Heart right ventricle (tissue), 16 donors: ENCODE measurements at regions of chr10 and their contacts with region 1.

Region 1: GRCh38 chr10:107814865-107815487 is 650.5 kb upstream of the SORCS1 start:
- DNase-seq: peak in 1 of 2 donors; percentile 38
- ATAC-seq: peak in 4 of 8 donors; percentile 49 to 58 (median 58)
- H3K4me3 ChIP-seq: no peak overlapping the region
- H3K27ac ChIP-seq: no peak overlapping the region
- H3K4me1 ChIP-seq: no peaks in the 10 kb centered on the region
- H3K27me3 ChIP-seq: no peaks in the 10 kb centered on the region
- CTCF ChIP-seq: peak; percentile 34 to 69 (median 57)

Region 2: DNA sequence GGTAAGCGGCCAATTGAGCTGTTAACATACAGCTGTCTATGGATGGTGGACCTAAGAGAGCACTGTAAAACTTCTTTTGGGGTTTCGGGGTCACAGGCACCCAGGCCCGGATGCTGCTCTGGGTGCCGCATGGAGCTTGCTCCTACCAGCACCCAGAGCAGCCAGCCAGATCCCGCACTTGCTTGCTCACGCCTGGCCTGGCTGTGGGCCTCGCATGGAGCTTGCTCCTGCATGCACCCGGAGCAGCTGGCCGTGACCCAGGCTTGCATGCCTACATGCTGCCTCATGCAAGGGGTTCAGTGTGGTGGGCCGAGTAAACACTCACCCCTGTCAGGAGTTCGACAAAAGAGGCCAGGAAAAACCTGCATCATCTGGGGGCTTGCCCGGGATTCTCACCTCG is 1547.4 kb before region 1 on chr10:
- intact Hi-C with region 1: loop called in 1 of 10 experiments (anchors 5 kb)
- DNase-seq: no peak
- ATAC-seq: no peak
- H3K4me3 ChIP-seq: no peak overlapping the region
- H3K27ac ChIP-seq: no peak overlapping the region
- H3K4me1 ChIP-seq: no peaks in the 10 kb centered on the region
- H3K27me3 ChIP-seq: no peaks in the 10 kb centered on the region
- CTCF ChIP-seq: no peak

Region 3: DNA sequence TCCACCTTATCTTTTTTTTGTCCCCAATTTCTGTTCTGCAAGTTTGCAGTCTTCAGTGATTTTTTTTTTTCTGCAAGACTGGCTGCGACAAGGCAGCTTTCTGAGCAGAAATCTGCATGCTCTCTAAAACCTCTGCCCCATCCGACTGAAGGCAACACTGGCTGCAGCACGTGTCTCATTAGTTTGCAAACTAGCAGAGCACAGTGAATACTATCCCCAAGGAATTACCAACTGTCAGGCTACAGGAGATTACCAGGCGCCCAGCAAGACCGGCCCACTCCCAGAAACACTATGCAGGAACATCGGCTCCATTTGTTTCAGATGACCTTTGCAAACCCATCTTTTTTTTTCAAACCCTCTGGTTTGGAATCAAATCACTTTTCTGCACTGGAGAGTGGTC is 1189.2 kb before region 1 on chr10:
- intact Hi-C with region 1: loop called in 2 of 10 experiments (anchors 10 kb)
- DNase-seq: no peak
- ATAC-seq: no peak
- H3K4me3 ChIP-seq: no peak overlapping the region
- H3K27ac ChIP-seq: no peak overlapping the region
- H3K4me1 ChIP-seq: peaks cover 0 to 6% (median 0%) of the 10 kb centered on the region in 9 donors
- H3K27me3 ChIP-seq: no peaks in the 10 kb centered on the region
- CTCF ChIP-seq: no peak

Region 4: GRCh38 chr10:106705681-106706100 is 1109.3 kb before region 1 on chr10:
- intact Hi-C with region 1: loop called in 5 of 10 experiments (anchors 10 kb)
- DNase-seq: peak; percentile 20 to 56
- ATAC-seq: peak in 6 of 8 donors; percentile 42 to 79 (median 71)
- H3K4me3 ChIP-seq: peak overlapping the region in 2 of 10 donors; percentile 10 to 14
- H3K27ac ChIP-seq: no peak overlapping the region
- H3K4me1 ChIP-seq: no peaks in the 10 kb centered on the region
- H3K27me3 ChIP-seq: peaks cover 0 to 13% (median 0%) of the 10 kb centered on the region in 7 donors
- CTCF ChIP-seq: peak; percentile 54 to 79 (median 75)

Region 5: GRCh38 chr10:106795619-106796018 is 1019.4 kb before region 1 on chr10:
- intact Hi-C with region 1: loop called in 4 of 10 experiments (anchors 5 to 10 kb)
- DNase-seq: peak in 1 of 2 donors; percentile 30
- ATAC-seq: peak in 6 of 8 donors; percentile 45 to 81 (median 74)
- H3K4me3 ChIP-seq: no peak overlapping the region
- H3K27ac ChIP-seq: no peak overlapping the region
- H3K4me1 ChIP-seq: no peaks in the 10 kb centered on the region
- H3K27me3 ChIP-seq: peaks cover 0 to 8% (median 0%) of the 10 kb centered on the region in 7 donors
- CTCF ChIP-seq: peak in 8 of 9 donors; percentile 18 to 61 (median 52)

Region 6: DNA sequence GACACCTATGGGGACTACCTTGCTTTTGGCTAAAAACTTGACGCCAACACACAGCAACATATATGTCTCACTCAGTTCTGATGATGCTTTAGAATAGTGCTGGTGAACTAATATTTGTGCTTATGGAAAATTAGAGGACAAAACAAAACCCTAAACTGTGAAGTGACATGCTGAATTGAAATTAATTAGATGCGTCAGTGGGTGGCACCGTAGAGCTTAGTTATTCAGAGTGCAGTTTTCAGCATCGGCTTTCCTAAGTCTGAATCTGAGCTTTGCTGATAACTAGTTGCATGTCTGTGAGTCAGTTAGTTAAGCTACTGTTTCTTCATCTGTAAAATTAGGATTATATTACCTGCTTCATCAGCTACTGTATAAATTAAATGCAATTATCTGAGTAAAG is 405.5 kb before region 1 on chr10:
- intact Hi-C with region 1: loop called in 2 of 10 experiments (anchors 10 kb)
- DNase-seq: no peak
- ATAC-seq: peak in 1 of 8 donors; percentile 43
- H3K4me3 ChIP-seq: no peak overlapping the region
- H3K27ac ChIP-seq: no peak overlapping the region
- H3K4me1 ChIP-seq: no peaks in the 10 kb centered on the region
- H3K27me3 ChIP-seq: peaks cover 0 to 6% (median 0%) of the 10 kb centered on the region in 7 donors
- CTCF ChIP-seq: peak in 7 of 9 donors; percentile 10 to 48 (median 32)

Region 7: GRCh38 chr10:107418407-107418806 is 396.6 kb before region 1 on chr10:
- intact Hi-C with region 1: loop called in 1 of 10 experiments (anchors 10 kb)
- DNase-seq: no peak
- ATAC-seq: no peak
- H3K4me3 ChIP-seq: no peak overlapping the region
- H3K27ac ChIP-seq: no peak overlapping the region
- H3K4me1 ChIP-seq: no peaks in the 10 kb centered on the region
- H3K27me3 ChIP-seq: no peaks in the 10 kb centered on the region
- CTCF ChIP-seq: no peak